ENCODE measurements at regions of chr7 and their contacts with region 1.

Region 1: DNA sequence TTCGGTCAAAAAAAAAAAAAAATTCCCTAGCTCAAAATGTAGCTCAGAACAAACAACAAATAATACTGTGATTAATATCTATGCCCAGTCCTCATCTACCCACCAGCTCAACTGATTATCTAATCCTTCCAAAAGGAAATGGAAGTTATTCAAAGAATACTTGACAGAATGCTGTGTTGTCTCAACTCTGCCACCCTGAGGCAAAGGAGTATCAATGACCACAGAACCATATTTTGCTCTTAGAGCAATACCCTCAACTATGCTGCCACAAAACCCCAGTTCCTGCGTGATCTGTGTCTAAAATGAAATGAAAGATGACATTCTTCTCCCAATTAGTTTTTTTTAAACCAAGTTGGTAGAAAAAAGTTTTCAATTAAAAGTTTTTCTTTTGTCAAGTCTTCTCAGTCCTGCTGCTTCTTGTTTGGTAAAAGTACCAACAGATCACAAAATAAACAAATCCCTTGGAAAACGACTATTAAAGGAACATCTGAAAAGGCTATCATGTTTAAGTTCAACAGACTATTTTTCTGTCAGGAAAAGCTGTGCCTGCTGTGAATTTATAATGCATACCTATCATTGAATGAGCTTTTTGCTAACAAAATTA is 21.6 kb downstream of the RBM28 start:
- DNase-seq: peak; percentile 70 to 84 (median 80)
- H3K4me3 ChIP-seq: no peak overlapping the region
- H3K27ac ChIP-seq: no peak overlapping the region
- H3K4me1 ChIP-seq: peaks cover 25 to 59% (median 54%) of the 10 kb centered on the region in 4 experiments
- H3K27me3 ChIP-seq: no peaks in the 10 kb centered on the region

Region 2: GRCh38 chr7:127708788-127709187 is 613.4 kb before region 1 on chr7:
- CTCF ChIA-PET with region 1: interaction called, 18 read pairs
- POLR2A ChIA-PET with region 1: no interaction called
- DNase-seq: peak; percentile 81 to 92 (median 86)
- H3K4me3 ChIP-seq: no peak overlapping the region
- H3K27ac ChIP-seq: no peak overlapping the region
- H3K4me1 ChIP-seq: no peaks in the 10 kb centered on the region
- H3K27me3 ChIP-seq: no peaks in the 10 kb centered on the region

Region 3: DNA sequence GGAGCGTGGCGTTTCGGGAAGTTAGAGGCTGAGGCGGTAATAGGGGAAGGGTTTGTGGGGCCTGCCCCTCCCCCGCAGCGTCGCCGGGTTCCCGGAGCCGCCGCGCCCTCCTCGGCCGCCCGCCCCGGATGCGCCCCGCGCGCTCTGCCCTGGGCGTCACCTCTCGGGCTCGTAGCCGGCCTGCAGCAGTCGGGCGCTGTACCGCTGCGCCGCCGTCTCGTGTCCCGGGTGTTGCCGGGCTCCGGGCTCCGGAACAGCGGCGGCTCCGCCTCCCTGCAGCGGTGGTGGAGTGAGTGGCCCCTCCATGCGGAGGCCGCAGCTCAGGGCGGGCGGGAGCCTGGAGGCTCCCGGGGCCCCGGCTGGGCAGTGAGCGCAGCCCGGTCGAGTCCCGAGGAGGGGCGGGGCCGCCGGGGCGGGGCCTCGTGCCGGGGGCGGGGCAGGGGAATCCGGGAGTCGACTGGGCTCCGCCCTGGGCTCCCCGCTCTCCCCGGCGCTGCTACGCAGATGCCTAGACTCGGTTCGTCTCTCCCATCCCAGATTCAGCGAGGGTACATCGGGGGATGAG is 87.5 kb after region 1 on chr7 and contains the start of gene IMPDH1:
- CTCF ChIA-PET with region 1: no interaction called
- POLR2A ChIA-PET with region 1: no interaction called
- DNase-seq: peak; percentile 53 to 79 (median 74)
- H3K4me3 ChIP-seq: peak within 1 kb of the TSS; percentile 73 to 91 (median 78)
- H3K27ac ChIP-seq: peak within 1 kb of the TSS in 1 of 2 experiments; percentile 57
- H3K4me1 ChIP-seq: peaks cover 9 to 52% (median 50%) of the 10 kb centered on the region in 4 experiments
- H3K27me3 ChIP-seq: no peaks in the 10 kb centered on the region

Region 4: GRCh38 chr7:129122078-129122750 is 800.1 kb after region 1 on chr7:
- CTCF ChIA-PET with region 1: no interaction called
- POLR2A ChIA-PET with region 1: no interaction called
- DNase-seq: no peak
- H3K4me3 ChIP-seq: peak overlapping the region in 1 of 7 experiments; percentile 1
- H3K27ac ChIP-seq: peak overlapping the region in 1 of 2 experiments; percentile 32
- H3K4me1 ChIP-seq: peaks cover 8 to 21% (median 19%) of the 10 kb centered on the region in 4 experiments
- H3K27me3 ChIP-seq: no peaks in the 10 kb centered on the region

Region 5: DNA sequence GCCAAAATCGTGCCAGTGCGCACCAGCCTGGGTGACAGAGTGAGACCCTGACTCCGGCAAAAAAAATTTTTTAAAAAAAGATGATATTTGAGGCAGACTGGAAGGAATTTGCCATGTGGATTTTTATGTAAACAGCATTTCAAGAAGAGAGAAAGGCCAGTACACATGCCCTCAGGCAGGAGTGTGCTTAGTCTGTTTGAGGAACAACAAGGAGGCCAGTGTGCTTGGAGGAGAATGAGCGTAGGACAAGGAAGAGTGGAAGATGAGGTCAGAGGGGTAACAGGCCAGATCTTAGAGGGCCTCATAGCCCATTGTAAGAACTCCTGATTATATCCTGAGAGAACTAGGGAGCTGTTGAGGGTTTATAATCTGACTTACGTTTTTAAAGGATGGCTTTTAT is 1094.9 kb after region 1 on chr7:
- CTCF ChIA-PET with region 1: no interaction called
- POLR2A ChIA-PET with region 1: no interaction called
- DNase-seq: no peak
- H3K4me3 ChIP-seq: no peak overlapping the region
- H3K27ac ChIP-seq: no peak overlapping the region
- H3K4me1 ChIP-seq: no peaks in the 10 kb centered on the region
- H3K27me3 ChIP-seq: no peaks in the 10 kb centered on the region